ENCODE measurements at regions of chr19 and their contacts with region 1.

Region 1: DNA sequence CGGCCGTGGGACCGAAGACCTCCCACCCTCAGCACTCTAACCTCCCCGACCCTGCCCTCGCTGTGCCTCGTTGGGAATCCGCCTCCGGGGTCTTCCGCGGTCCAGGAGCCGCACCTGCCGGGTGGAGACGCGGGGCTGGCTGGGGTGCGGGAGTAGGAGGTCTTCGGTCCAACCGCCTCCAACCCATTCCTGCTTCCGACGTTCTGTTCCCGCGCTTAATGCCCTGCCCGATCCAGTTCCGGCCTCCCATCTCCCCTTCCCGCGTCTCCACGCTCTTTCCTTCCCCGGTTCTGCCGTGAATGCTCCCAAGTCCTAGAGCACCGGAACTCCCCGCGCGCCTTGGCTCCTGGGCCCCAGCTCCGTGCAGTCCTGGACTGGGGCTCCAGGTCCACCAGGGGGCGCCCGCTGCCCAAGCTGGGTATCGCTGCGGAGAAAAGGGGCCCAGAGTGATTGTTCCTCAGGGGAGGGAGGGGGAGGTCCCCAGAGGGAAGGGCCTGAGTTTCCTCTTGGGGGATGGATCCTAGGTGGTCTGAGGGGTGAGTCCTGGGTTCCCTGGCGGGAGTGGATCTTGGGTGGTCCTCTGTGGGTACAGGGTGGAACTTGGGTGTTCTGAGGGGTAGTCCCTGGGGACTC is 14.1 kb upstream of the TNFSF9 start:
- DNase-seq: peak; percentile 98
- H3K4me3 ChIP-seq: peak overlapping the region; percentile 70
- H3K27ac ChIP-seq: peak overlapping the region; percentile 90
- H3K4me1 ChIP-seq: peaks cover 53% of the 10 kb centered on the region
- CTCF ChIP-seq: peak; percentile 100

Region 2: DNA sequence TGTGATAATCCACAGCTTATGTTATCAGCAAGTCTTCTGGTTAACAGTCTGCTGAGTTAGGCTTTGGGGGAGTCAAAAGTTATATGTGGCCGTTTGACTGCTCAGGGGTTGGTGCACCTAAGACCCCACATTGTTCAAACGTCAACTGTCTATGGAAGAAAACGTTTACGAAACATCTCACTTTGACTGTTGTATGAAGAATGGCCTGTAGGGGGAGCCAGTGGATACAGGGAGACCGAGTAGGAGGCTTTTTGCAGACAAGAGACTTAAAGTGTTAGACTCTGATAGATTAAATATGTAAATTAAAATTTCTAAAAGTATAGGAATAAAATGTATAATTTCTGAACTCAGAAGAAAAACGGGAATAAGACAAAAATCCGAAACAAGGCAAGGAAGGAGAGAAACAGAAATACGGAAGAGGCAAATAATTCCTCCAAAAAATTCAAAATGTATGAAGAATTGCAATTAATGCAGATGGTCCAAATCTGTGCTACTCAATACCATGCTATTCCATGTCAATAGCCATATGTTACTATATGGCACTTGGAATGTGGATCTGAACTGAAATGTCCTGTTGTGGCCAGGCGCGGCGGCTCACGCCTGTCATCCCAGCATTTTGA is 115.3 kb after region 1 on chr19:
- CTCF ChIA-PET with region 1: no interaction called
- POLR2A ChIA-PET with region 1: interaction called, 3 read pairs
- intact Hi-C with region 1: loop called (anchors 1 kb)
- DNase-seq: peak; percentile 92
- H3K4me3 ChIP-seq: no peak overlapping the region
- H3K27ac ChIP-seq: peak overlapping the region; percentile 7
- H3K4me1 ChIP-seq: peaks cover 33% of the 10 kb centered on the region
- CTCF ChIP-seq: peak; percentile 99

Region 3: GRCh38 chr19:6718741-6719539 is 202.2 kb after region 1 on chr19:
- CTCF ChIA-PET with region 1: no interaction called
- POLR2A ChIA-PET with region 1: no interaction called
- intact Hi-C with region 1: loop called (anchors 2 kb)
- DNase-seq: peak; percentile 86
- H3K4me3 ChIP-seq: no peak overlapping the region
- H3K27ac ChIP-seq: no peak overlapping the region
- H3K4me1 ChIP-seq: peaks cover 47% of the 10 kb centered on the region
- CTCF ChIP-seq: no peak

Measured in OCI-LY7 (cell line).